Gastrocnemius medialis (tissue), 4 donors: ENCODE measurements at regions of chr13 and their contacts with region 1.

Region 1: GRCh38 chr13:110138010-110138699 is 168.8 kb downstream of the COL4A1 start:
- DNase-seq: peak; percentile 72 to 75
- ATAC-seq: peak; percentile 67 to 68
- H3K4me3 ChIP-seq: peak overlapping the region; percentile 53 to 81 (median 60)
- H3K27ac ChIP-seq: peak overlapping the region; percentile 85 to 95 (median 89)
- H3K4me1 ChIP-seq: peaks cover 41 to 43% of the 10 kb centered on the region in 2 donors
- H3K27me3 ChIP-seq: no peaks in the 10 kb centered on the region
- CTCF ChIP-seq: peak in 2 of 5 experiments; percentile 14 to 17
- POLR2A ChIP-seq: peak; percentile 55 to 65

Region 2: GRCh38 chr13:109243311-109243951 is 894.7 kb before region 1 on chr13:
- in situ Hi-C with region 1: no loop called
- intact Hi-C with region 1: loop called (anchors 10 kb)
- DNase-seq: peak; percentile 72 to 73
- ATAC-seq: peak; percentile 95 to 97
- H3K4me3 ChIP-seq: no peak overlapping the region
- H3K27ac ChIP-seq: peak overlapping the region; percentile 79 to 83 (median 82)
- H3K4me1 ChIP-seq: peaks cover 3 to 15% of the 10 kb centered on the region in 2 donors
- H3K27me3 ChIP-seq: no peaks in the 10 kb centered on the region
- CTCF ChIP-seq: no peak
- POLR2A ChIP-seq: no peak

Region 3: GRCh38 chr13:110097013-110097412 is 41.1 kb before region 1 on chr13:
- in situ Hi-C with region 1: no loop called
- intact Hi-C with region 1: loop called (anchors 5 kb)
- DNase-seq: no peak
- ATAC-seq: no peak
- H3K4me3 ChIP-seq: no peak overlapping the region
- H3K27ac ChIP-seq: no peak overlapping the region
- H3K4me1 ChIP-seq: peaks cover 18 to 22% of the 10 kb centered on the region in 2 donors
- H3K27me3 ChIP-seq: no peaks in the 10 kb centered on the region
- CTCF ChIP-seq: no peak
- POLR2A ChIP-seq: no peak